ENCODE measurements at regions of chr2 and their contacts with region 1.

Region 1: GRCh38 chr2:88055371-88056128 is at the start of gene KRCC1:
- DNase-seq: peak; percentile 94
- H3K4me3 ChIP-seq: peak within 1 kb of the TSS; percentile 85 to 99
- H3K27ac ChIP-seq: peak within 1 kb of the TSS; percentile 97 to 98
- H3K4me1 ChIP-seq: peaks cover 0 to 5% of the 10 kb centered on the region in 2 donors
- H3K27me3 ChIP-seq: no peaks in the 10 kb centered on the region
- CTCF ChIP-seq: peak in 2 of 4 experiments; percentile 17 to 45
- POLR2A ChIP-seq: peak; percentile 81 to 97
- total RNA-seq, gene KRCC1: 19.7 to 62.1 (median 30.1) TPM

Region 2: DNA sequence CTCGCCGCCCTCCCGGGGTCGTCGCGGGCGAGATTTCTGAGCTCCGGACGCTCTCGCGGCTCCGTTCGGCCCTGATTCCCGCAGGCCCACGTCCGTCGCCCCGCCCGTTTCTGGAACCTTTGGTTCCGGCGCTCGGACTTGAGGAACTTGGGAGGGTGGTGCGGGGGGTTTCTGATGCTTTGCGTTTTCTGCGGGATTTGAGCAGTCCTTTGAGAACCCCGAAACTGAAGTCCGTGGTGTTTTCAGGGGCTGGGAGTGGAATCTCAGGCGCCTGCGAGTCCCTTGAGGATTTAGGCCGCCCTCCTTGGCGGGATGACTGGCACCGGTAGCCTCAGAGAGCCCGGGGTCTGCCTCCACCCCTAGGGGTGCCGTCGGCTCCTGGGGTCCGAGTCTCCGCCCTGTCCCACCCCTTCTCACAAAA is 114.9 kb after region 1 on chr2:
- intact Hi-C with region 1: loop called (anchors 10 kb)
- DNase-seq: peak in 1 of 2 donors; percentile 34
- H3K4me3 ChIP-seq: peak overlapping the region; percentile 70 to 86
- H3K27ac ChIP-seq: peak overlapping the region; percentile 79 to 89
- H3K4me1 ChIP-seq: no peaks in the 10 kb centered on the region
- H3K27me3 ChIP-seq: no peaks in the 10 kb centered on the region
- CTCF ChIP-seq: no peak
- POLR2A ChIP-seq: no peak

Region 3: DNA sequence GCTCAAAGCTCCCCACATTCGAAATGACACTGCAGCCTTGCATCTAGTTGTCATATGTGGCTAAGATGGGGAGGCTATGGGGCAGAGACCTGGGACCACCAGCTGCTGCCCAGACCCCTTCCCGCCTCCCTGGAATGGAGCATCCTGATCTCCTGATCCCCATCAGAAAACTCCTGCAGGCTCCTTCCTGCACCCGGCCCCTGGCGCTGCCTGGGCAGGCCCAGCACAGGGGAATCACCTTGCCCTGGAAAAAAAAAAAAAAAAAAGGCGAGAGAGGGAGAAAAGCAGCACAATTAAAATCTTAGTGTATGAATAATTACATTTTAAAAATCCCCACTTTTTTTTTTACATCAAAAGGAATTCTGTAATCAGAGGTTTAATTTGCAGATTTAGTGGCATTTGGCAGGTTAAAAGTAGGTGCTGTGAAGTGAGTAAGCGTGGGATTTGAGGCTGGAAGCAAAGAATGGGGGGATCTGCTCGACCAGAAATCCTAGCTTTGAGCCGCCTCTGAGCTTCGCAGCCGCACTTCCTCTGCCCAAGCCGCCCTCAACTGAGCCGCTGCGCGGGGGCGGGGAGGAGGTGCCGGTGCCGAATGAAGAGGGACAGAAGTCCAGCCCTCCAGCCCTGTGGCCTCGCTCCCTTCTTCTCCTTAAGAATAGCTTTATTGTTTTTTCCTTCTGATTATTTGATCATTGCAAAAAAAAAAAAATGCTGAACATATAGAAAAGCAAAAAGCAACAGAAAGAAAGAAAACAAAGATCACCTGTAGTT is 144.5 kb after region 1 on chr2:
- intact Hi-C with region 1: no loop called
- DNase-seq: no peak
- H3K4me3 ChIP-seq: no peak overlapping the region
- H3K27ac ChIP-seq: no peak overlapping the region
- H3K4me1 ChIP-seq: no peaks in the 10 kb centered on the region
- H3K27me3 ChIP-seq: peaks cover 0 to 6% of the 10 kb centered on the region in 2 donors
- CTCF ChIP-seq: no peak
- POLR2A ChIP-seq: no peak

Region 4: GRCh38 chr2:88729061-88729745 is 673.7 kb after region 1 on chr2:
- intact Hi-C with region 1: no loop called
- DNase-seq: no peak
- H3K4me3 ChIP-seq: no peak overlapping the region
- H3K27ac ChIP-seq: no peak overlapping the region
- H3K4me1 ChIP-seq: no peaks in the 10 kb centered on the region
- H3K27me3 ChIP-seq: no peaks in the 10 kb centered on the region
- CTCF ChIP-seq: no peak
- POLR2A ChIP-seq: no peak

Measured in uterus (tissue), 4 donors.